Right cardiac atrium (tissue), 5 donors: ENCODE measurements at regions of chr19 and their contacts with region 1.

Region 1: GRCh38 chr19:34957830-34958751 is 5.9 kb downstream of the ZNF792 start:
- DNase-seq: no peak
- ATAC-seq: no peak
- H3K4me3 ChIP-seq: no peak overlapping the region
- H3K27ac ChIP-seq: no peak overlapping the region
- H3K4me1 ChIP-seq: peaks cover 7% of the 10 kb centered on the region
- H3K27me3 ChIP-seq: no peaks in the 10 kb centered on the region

Region 2: GRCh38 chr19:34319785-34320184 is 638.3 kb before region 1 on chr19:
- intact Hi-C with region 1: loop called in 1 of 4 experiments (anchors 10 kb)
- DNase-seq: no peak
- ATAC-seq: peak in 1 of 2 donors; percentile 18
- H3K4me3 ChIP-seq: no peak overlapping the region
- H3K27ac ChIP-seq: peak overlapping the region; percentile 72
- H3K4me1 ChIP-seq: peaks cover 29% of the 10 kb centered on the region
- H3K27me3 ChIP-seq: no peaks in the 10 kb centered on the region

Region 3: GRCh38 chr19:35000651-35001424 is 42.7 kb after region 1 on chr19:
- intact Hi-C with region 1: no loop called
- DNase-seq: peak in 2 of 3 donors; percentile 70 to 78
- ATAC-seq: peak; percentile 1 to 3
- H3K4me3 ChIP-seq: peak overlapping the region; percentile 99
- H3K27ac ChIP-seq: peak overlapping the region; percentile 50
- H3K4me1 ChIP-seq: peaks cover 7% of the 10 kb centered on the region
- H3K27me3 ChIP-seq: no peaks in the 10 kb centered on the region

Region 4: GRCh38 chr19:35030257-35031071 is 72.4 kb after region 1 on chr19 and contains the start of gene SCN1B:
- intact Hi-C with region 1: no loop called
- DNase-seq: peak; percentile 77 to 91 (median 88)
- ATAC-seq: peak; percentile 67 to 81
- H3K4me3 ChIP-seq: peak within 1 kb of the TSS; percentile 90
- H3K27ac ChIP-seq: peak within 1 kb of the TSS; percentile 66
- H3K4me1 ChIP-seq: peaks cover 2% of the 10 kb centered on the region
- H3K27me3 ChIP-seq: no peaks in the 10 kb centered on the region
- total RNA-seq, gene SCN1B: 74.3 to 134 (median 87.1) TPM